ENCODE measurements at regions of chr1 and their contacts with region 1.

Region 1: DNA sequence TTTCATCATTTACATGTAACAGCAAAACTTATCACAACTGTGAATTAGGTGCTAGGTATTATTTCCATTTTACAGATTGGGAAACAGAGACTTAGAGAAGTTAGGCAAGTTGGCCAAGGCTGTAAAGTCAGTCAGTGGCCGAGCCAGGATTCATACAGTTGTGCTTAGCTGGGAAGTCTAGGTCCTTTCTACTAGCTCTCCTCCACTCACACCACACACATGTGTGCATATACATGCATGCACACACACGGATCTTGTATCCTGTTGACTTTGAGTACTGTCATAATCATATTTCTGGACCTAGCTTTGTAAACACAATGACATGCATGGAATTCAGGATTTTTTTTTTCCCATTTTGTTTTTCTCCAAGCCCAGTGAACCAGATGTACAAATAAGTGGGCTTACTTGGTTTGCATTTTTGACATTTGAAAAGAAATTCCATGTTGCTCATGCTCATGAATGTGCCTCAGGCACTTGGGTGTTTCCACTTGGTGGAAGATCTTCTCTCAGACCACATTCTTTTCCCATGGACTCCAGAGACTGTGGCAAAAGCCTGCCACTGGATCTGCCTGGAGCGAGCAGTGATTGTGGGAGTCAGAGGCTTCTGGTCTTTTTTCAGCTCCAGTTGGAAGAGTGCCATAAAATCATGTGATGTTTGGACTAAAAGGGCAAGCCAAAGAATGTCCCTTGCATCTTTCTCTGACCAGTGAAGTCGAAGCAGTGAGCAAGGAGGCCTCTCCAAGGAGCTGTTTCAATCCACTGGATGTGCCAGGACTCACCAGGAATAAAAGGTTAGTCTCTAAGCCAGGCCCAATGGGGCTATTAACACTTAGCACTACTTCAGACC is 61.6 kb upstream of the DNAJC6 start:
- DNase-seq: no peak
- H3K4me3 ChIP-seq: no peak overlapping the region
- H3K27ac ChIP-seq: no peak overlapping the region
- H3K4me1 ChIP-seq: no peaks in the 10 kb centered on the region
- H3K27me3 ChIP-seq: no peaks in the 10 kb centered on the region
- CTCF ChIP-seq: no peak
- EP300 ChIP-seq: no peak
- POLR2A ChIP-seq: no peak
- RAD21 ChIP-seq: no peak

Region 2: GRCh38 chr1:65230731-65231481 is 16.8 kb before region 1 on chr1:
- CTCF ChIA-PET with region 1: interaction called, 33 read pairs
- POLR2A ChIA-PET with region 1: no interaction called
- DNase-seq: no peak
- H3K4me3 ChIP-seq: no peak overlapping the region
- H3K27ac ChIP-seq: no peak overlapping the region
- H3K4me1 ChIP-seq: no peaks in the 10 kb centered on the region
- H3K27me3 ChIP-seq: no peaks in the 10 kb centered on the region
- CTCF ChIP-seq: no peak
- EP300 ChIP-seq: no peak
- POLR2A ChIP-seq: no peak
- RAD21 ChIP-seq: no peak

Region 3: DNA sequence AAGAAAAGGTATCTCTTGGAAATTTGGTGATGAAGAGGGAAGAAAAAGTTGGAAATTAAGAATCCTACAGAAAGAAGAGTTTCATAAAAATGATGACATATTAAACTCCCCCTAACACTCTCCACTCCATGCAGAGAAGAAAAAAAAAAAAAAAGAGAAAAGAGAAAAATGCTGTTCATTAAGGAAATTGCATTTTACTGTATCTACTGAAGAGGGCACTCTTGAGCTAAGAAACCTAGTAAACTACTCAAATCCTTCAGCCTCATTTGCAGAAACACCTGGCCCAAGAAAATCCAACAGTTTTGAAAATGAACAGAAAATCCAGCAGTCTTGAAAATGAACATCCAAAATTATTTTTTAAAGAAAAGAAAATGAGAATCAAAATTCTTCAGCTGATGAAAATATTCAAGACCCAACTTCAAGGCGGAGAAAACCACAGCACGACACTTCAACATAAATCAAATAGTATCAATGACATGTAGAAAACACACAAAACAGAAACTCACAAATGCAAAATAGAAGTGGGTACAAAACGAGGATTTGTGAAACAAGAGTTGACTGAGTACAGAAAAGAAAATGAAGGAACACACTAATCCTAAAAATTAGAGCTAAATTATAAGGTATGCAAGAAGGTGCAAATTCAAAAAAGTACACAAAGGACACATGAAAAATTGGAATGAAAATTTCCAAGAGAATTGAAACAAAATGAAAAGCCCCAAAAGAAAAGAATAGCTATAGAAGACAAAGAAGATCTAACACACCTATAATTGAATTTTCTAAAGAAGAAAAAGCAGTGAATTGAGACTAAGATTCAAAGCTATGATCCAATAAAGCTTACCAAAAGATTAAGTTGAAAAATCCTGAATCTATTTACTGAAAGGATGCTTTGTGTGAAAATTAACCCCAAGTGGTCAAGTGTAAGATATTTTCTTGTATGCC is 11.6 kb before region 1 on chr1:
- CTCF ChIA-PET with region 1: interaction called, 33 read pairs
- POLR2A ChIA-PET with region 1: interaction called, 3 read pairs
- DNase-seq: no peak
- H3K4me3 ChIP-seq: no peak overlapping the region
- H3K27ac ChIP-seq: no peak overlapping the region
- H3K4me1 ChIP-seq: no peaks in the 10 kb centered on the region
- H3K27me3 ChIP-seq: no peaks in the 10 kb centered on the region
- CTCF ChIP-seq: peak in 2 of 3 experiments; percentile 55 to 65; a peak in 3 of 4 replicates
- EP300 ChIP-seq: no peak
- POLR2A ChIP-seq: no peak
- RAD21 ChIP-seq: peak; percentile 87 to 88